ENCODE measurements at regions of chr2 and their contacts with region 1.

Region 1: GRCh38 chr2:63903003-63903402 is 61.3 kb downstream of the UGP2 start:
- DNase-seq: no peak
- ATAC-seq: no peak
- H3K4me3 ChIP-seq: no peak overlapping the region
- H3K27ac ChIP-seq: no peak overlapping the region
- H3K4me1 ChIP-seq: no peaks in the 10 kb centered on the region
- H3K27me3 ChIP-seq: no peaks in the 10 kb centered on the region

Region 2: GRCh38 chr2:63888490-63889402 is 14.3 kb before region 1 on chr2:
- intact Hi-C with region 1: loop called in 1 of 4 experiments (anchors 2 kb)
- DNase-seq: peak in 2 of 3 donors; percentile 37 to 55
- ATAC-seq: peak; percentile 73
- H3K4me3 ChIP-seq: no peak overlapping the region
- H3K27ac ChIP-seq: no peak overlapping the region
- H3K4me1 ChIP-seq: no peaks in the 10 kb centered on the region
- H3K27me3 ChIP-seq: no peaks in the 10 kb centered on the region

Measured in right cardiac atrium (tissue), 5 donors.